ENCODE measurements at regions of chr4 and their contacts with region 1.

Region 1: DNA sequence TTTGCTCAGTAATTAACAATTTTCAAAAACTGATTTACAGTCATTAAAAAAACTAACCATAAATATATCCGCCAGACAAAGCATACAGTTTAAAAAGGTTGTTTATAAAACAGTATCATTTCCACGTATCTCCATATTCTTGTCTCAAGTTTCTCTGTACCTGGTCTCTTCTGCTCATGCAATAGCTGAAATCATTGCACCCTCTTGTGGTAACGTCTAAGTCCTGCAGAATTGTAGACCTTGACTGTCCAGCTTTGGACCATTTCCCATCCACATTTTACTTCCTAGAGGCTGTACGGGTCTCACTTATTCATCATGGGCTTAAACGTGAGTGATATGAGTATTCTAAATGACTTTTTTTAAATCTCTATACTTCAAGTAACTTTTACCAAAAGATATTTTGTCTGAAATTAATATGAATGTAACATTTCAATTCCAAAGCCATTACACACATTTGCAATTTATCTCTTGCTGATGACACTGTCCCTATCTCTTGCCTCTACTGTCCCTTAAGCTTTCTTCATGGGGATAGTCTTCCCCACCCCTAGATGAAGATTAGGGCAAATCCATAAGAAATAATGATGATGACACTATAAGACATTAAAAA is 118.5 kb downstream of the BTC start:
- DNase-seq: no peak

Region 2: DNA sequence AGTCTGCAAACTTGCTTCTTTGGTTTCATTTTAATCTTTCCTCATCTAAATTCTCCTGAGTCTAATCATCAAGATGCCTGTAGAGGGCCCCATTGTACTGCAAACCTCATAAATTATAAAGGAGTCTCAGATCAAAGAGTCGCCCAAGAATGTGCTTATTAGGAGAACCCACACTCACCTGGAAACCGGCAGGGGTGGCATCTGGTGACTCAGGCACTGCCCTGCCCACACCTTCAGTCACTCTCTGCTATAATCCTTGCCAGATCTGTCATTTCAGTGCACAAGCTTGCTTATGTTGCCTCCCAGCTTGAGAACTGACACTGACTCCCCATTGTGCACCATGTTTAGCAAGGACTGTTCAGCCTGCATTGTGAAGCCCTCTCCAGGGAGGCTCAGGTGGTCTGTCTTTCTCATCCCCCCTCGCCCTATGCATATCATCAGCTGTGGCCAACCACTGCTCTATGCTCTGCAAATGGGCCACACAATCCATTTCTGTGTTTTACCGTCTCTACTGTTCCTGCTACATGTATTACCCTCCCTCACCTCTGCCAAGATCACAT is 355.1 kb before region 1 on chr4:
- intact Hi-C with region 1: loop called (anchors 10 kb)
- DNase-seq: peak in 1 of 10 donors; percentile 47

Region 3: DNA sequence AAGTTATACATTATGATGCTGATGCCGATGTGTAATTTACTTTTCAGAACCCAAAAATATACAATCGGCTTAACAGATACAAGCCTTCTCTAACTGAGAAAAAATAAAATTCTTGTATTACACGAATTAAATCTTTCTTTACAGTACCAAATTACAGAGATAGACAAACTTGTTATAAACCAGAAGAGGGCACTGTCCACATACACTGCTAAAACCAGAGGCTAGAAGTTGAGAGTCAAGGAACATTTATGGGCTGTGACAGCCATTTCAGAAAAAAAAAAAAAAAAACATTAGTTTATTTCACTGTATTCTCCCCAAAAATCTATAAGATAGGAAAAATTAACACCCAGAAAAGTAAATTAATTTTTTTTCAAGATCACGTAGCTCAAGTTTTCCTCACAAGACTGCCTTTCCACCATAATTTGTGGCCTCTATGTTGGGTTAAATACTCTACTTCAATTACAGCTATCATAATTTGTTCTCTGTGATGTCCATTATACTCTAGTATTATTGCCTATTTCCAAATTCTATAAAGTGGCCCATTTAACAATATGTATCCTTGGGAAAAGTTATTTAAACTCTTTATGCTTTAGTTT is 298.8 kb before region 1 on chr4:
- intact Hi-C with region 1: loop called (anchors 5 kb)
- DNase-seq: no peak